ENCODE measurements at regions of chr1 and their contacts with region 1.

Region 1: DNA sequence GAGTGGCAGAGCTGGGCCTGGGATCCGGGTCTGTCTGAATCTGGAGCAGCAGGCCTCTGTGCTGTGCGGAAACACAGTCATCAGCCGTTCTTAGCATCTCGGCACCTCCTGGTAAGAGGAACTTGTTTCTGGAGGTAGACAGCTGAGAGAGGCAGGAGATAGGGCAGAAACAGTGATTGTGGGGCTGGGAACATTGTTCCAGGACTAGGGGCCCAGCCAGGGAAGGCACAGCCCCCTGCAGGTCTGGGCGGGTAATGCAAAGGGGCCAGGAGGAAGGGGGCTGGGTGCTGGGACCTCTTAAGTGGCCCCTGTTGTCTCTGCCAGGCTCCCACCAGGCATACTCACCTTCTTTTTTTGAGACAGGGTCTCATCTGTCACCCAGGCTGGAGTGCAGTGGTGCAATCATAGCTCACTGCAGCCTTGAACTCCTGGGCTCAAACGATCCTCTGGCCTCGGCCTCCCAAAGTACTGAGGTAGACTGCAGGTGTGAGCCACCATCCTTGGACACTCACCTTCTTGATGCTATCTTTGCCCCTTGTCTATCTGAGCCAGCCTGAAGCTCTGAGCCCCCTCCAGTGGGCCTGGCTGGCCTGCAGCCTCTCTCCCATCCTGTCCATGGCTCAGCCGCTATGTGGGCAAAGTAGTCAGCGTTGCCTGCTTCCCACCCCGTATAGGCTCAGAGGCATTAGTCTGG is 134.3 kb upstream of the ZBTB40 start:
- DNase-seq: no peak
- H3K4me3 ChIP-seq: no peak overlapping the region
- H3K27ac ChIP-seq: no peak overlapping the region
- H3K4me1 ChIP-seq: no peaks in the 10 kb centered on the region
- H3K27me3 ChIP-seq: no peaks in the 10 kb centered on the region
- CTCF ChIP-seq: peak; percentile 41 to 52

Region 2: GRCh38 chr1:22204941-22205913 is 112.1 kb before region 1 on chr1:
- CTCF ChIA-PET with region 1: no interaction called
- dilution Hi-C with region 1: loop called (anchors 5 kb)
- in situ Hi-C with region 1: no loop called
- intact Hi-C with region 1: no loop called
- DNase-seq: no peak
- H3K4me3 ChIP-seq: no peak overlapping the region
- H3K27ac ChIP-seq: no peak overlapping the region
- H3K4me1 ChIP-seq: no peaks in the 10 kb centered on the region
- H3K27me3 ChIP-seq: peaks cover 9% of the 10 kb centered on the region
- CTCF ChIP-seq: no peak

Region 3: GRCh38 chr1:22350171-22350909 is 33.0 kb after region 1 on chr1:
- CTCF ChIA-PET with region 1: no interaction called
- dilution Hi-C with region 1: loop called (anchors 5 kb)
- in situ Hi-C with region 1: no loop called
- intact Hi-C with region 1: no loop called
- DNase-seq: no peak
- H3K4me3 ChIP-seq: no peak overlapping the region
- H3K27ac ChIP-seq: no peak overlapping the region
- H3K4me1 ChIP-seq: no peaks in the 10 kb centered on the region
- H3K27me3 ChIP-seq: no peaks in the 10 kb centered on the region
- CTCF ChIP-seq: no peak

Measured in mammary epithelial cell (primary cell).